ENCODE measurements at regions of chr19 and their contacts with region 1.

Region 1: GRCh38 chr19:12610540-12611360 is at the starts of genes ZNF490 and ZNF791:
- DNase-seq: peak; percentile 93 to 98 (median 95)
- H3K4me3 ChIP-seq: peak within 1 kb of the TSS; percentile 93
- H3K4me3 Mint-ChIP-seq: peak within 1 kb of the TSS; percentile 99 to 100 (median 100)
- H3K27ac ChIP-seq: peak within 1 kb of the TSS; percentile 92
- H3K27ac Mint-ChIP-seq: peak within 1 kb of the TSS; percentile 94 to 100 (median 100)
- H3K4me1 ChIP-seq: peaks cover 42% of the 10 kb centered on the region
- H3K4me1 Mint-ChIP-seq: peaks cover 35 to 64% (median 48%) of the 10 kb centered on the region in 3 donors
- H3K27me3 ChIP-seq: no peaks in the 10 kb centered on the region
- H3K27me3 Mint-ChIP-seq: no peaks in the 10 kb centered on the region
- total RNA-seq, gene ZNF490: 8.0 to 8.4 TPM
- total RNA-seq, gene ZNF791: 23.6 to 23.8 TPM

Region 2: GRCh38 chr19:12095111-12095790 is 515.5 kb before region 1 on chr19:
- CTCF ChIA-PET with region 1: no interaction called
- POLR2A ChIA-PET with region 1: no interaction called
- DNase-seq: no peak
- H3K4me3 ChIP-seq: no peak overlapping the region
- H3K4me3 Mint-ChIP-seq: peak overlapping the region in 1 of 7 donors; percentile 44
- H3K27ac ChIP-seq: no peak overlapping the region
- H3K27ac Mint-ChIP-seq: no peak overlapping the region
- H3K4me1 ChIP-seq: no peaks in the 10 kb centered on the region
- H3K4me1 Mint-ChIP-seq: peaks cover 8 to 14% (median 10%) of the 10 kb centered on the region in 3 donors
- H3K27me3 ChIP-seq: no peaks in the 10 kb centered on the region
- H3K27me3 Mint-ChIP-seq: peaks cover 24 to 33% of the 10 kb centered on the region in 2 donors

Region 3: DNA sequence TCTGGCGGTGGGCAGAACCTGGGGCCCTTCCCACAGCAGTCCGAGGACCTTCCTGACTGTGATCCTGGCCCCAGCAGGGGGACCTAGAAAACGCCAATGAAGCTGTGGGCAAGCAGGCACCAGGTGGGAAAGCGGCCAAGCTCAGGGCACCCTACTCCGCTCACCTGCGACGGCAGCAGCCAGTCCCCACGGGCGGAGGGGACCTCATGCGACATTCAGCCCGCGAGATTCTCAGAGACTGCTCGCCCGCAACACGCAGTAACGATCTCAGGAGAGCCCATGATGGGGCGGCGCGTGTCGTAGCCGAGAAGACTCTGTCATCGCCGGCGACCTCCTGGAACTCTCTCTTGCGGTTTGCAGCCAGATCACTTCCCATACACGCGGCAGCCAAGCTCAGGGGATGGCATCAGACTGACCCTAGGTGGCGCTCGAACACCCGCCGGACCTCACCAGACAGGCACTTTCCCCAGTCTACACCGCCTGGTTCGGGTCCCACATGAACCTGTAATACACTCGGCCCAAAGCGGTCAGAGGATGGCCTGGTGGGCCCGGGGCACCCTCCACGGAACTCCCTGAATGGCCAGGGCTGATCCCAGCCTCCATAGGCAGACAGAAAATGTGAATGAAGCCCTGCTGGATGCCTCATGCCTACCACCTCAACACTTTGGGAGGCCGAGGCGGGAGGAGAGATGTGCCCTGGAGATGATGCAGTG is 29.3 kb after region 1 on chr19:
- CTCF ChIA-PET with region 1: interaction called, 21 read pairs
- POLR2A ChIA-PET with region 1: no interaction called
- DNase-seq: peak; percentile 69 to 84 (median 73)
- H3K4me3 ChIP-seq: peak overlapping the region; percentile 45
- H3K4me3 Mint-ChIP-seq: peak overlapping the region; percentile 46 to 87 (median 77)
- H3K27ac ChIP-seq: no peak overlapping the region
- H3K27ac Mint-ChIP-seq: peak overlapping the region in 7 of 8 donors; percentile 4 to 92 (median 73)
- H3K4me1 ChIP-seq: peaks cover 11% of the 10 kb centered on the region
- H3K4me1 Mint-ChIP-seq: peaks cover 11 to 17% (median 12%) of the 10 kb centered on the region in 3 donors
- H3K27me3 ChIP-seq: no peaks in the 10 kb centered on the region
- H3K27me3 Mint-ChIP-seq: peaks cover 0 to 1% of the 10 kb centered on the region in 2 donors

Region 4: GRCh38 chr19:12656899-12657571 is 46.3 kb after region 1 on chr19:
- CTCF ChIA-PET with region 1: no interaction called
- POLR2A ChIA-PET with region 1: no interaction called
- DNase-seq: no peak
- H3K4me3 ChIP-seq: no peak overlapping the region
- H3K4me3 Mint-ChIP-seq: no peak overlapping the region
- H3K27ac ChIP-seq: no peak overlapping the region
- H3K27ac Mint-ChIP-seq: peak overlapping the region in 1 of 8 donors; percentile 74
- H3K4me1 ChIP-seq: no peaks in the 10 kb centered on the region
- H3K4me1 Mint-ChIP-seq: peaks cover 0 to 1% (median 0%) of the 10 kb centered on the region in 3 donors
- H3K27me3 ChIP-seq: no peaks in the 10 kb centered on the region
- H3K27me3 Mint-ChIP-seq: no peaks in the 10 kb centered on the region